Cardiac septum (tissue), 1 donor: ENCODE measurements at regions of chr2 and their contacts with region 1.

Region 1: GRCh38 chr2:96305091-96305978 is at the start of gene SNRNP200:
- DNase-seq: peak; percentile 95
- total RNA-seq, gene SNRNP200: 62.2 TPM

Region 2: GRCh38 chr2:96265840-96266679 is 39.3 kb before region 1 on chr2 and contains the starts of genes CIAO1 and TMEM127:
- intact Hi-C with region 1: loop called (anchors 2 kb)
- DNase-seq: peak; percentile 100
- total RNA-seq, gene CIAO1: 56.1 TPM
- total RNA-seq, gene TMEM127: 92.7 TPM

Region 3: DNA sequence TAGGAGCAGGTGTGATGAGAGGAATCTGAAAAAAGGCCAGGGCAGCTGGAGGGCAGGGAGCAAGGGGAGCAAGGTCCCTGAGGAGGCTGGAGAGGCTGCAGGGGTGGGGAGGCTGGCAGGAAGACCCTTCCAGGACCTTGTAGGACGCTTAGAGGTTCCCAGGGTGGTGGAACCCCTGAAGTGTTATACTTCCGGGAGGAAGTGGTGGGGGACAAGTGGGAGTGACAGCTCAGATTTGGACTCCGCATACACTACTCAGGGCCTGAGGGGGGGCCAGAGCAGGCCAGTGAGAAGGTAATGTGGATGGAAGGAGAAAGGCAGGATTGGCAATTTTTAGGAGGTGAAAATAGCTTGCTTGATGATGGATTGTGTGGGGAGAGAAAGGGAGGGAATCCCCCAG is 28.4 kb after region 1 on chr2:
- intact Hi-C with region 1: loop called (anchors 2 kb)
- DNase-seq: no peak

Region 4: GRCh38 chr2:96374211-96374951 is 69.0 kb after region 1 on chr2:
- intact Hi-C with region 1: no loop called
- DNase-seq: no peak

Region 5: DNA sequence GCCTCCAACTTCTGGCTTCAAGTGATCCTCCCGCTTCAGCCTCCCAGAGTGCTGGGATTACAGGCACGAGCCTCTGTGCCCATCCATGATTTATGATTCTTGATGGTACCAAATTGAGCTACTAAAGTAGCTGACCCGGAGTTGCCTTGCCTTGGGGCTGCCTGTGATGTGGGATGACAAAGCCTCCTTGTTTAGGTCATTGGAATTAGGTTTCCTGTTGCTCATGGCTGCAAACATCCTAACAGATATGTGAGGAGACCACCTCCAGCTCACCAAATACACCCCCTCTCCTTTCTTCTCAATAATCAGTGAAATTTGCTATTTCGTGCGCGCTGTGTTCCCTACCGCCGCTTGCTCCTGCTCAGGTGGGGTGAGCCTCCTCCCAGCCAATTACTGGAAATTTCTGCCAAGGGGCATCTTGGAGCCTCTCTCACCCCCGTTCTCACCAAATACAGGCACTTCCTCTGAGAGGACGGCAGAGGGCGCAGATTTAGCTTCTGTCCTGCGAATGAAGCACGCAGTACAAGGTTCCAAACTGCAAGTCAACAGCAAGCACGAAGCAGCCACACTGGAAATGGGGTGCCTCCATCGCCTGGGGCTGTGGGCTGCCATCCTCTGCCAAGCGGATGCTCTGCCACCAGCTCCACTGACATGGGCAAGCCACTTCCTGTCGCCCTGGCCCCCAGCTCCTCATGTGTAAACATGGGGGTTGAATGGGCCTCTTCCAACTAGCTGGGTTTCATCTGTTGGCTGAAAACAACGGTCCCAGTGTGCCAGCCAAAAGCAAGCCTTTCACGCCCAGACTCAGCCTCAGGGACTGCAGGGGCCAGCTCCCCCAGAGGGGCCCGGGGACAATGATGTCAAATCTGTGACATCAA is 101.9 kb after region 1 on chr2:
- intact Hi-C with region 1: loop called (anchors 10 kb)
- DNase-seq: peak; percentile 41

Region 6: DNA sequence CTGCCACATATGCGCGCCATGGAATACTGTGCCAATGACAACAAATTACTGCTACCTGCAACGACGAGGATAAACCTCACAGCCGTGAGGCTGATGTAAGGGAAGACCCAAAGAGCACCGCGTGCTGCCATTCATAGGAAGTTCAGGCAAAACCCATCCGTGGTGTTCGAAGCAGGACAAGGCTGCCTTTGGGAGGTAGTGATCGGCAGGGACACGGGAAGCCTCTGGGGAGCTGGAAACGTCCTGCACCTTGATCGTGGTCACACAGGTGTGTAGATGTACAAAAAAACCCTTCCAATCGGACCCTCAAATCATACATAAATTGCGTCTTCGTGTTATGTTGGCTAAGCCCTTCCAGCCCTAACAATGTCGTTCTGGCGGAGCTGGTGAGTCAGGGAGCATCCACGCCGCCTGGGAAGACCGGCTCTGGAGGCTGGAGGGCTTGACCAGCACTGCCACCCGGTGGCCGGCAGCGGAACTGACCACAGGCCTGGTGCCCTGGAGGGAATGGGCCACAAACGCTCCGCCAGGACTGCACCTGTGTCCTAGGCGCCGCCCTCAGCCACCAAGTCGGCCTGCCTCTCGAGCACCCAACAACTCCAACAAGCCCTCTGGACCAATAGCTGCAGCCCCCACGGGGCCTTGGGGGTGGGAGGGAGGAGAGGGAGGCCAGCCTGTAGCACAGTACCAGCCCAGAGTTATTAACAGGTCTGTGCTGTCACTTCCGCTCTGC is 203.9 kb after region 1 on chr2:
- intact Hi-C with region 1: loop called (anchors 5 kb)
- DNase-seq: peak; percentile 94